ENCODE measurements at regions of chr13 and their contacts with region 1.

Region 1: DNA sequence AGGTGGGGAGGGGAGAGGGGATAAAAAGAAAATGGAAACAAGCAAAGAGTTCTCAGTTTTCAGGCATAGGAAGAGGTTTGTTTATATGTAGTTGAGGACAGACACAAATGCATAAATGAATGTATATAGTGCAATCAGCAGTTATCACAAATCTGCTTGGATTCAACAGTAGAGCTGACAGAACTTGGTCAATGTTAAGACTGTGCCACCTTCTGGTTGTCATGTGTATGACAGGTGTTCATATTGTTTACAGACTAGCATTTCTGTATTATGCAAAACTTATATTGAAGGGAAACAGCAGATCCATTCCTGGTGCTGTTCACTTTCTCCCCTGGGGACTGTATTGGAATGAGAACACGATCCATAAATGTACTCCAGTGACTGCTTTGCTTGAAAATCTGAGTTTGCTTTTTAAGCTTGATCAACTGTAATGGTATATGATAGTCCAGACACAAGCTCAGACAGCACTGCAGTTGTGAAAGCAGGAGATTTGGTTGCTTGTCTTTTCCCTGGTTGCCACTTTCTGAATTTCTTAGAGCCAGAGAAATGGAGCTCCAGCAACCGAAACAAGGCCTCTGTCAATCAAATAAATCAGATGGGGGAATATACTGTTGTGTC is 319.5 kb upstream of the OBI1 start:
- DNase-seq: no peak

Region 2: DNA sequence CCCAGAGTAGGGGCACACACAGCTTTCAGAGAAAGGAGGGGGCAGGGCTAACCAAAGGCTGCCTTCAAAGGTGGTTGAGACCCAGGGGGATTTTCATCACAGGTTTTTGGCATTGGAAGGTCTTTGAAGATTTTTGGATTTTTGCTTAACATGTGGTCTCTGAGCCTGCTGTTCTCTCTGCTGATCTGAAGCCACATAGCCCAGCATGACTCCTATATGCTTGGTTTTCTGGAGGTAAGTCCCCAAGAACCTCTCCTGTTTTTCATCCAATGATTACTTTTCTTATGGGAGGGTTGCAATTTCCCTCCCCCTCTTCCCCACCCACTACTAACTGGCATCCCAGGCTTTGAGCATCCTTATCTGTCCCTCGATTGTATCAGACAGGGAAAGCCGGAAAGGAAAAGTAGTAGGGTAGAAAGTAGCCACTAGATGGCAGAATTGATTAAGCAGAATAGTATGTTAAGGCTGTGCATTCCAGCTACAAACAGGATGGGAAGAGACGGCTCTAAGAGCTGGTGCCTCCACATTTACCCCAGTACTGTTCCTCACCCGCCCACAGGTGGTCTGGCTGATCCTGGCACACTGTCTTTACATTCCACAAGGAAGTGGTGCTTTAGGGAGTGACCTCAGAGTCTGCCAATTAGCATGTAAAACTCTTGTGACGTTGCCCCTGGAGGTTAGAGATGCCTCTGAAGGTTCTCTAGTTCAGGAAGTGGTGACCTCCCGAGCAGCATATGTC is 840.9 kb before region 1 on chr13:
- intact Hi-C with region 1: loop called (anchors 2 kb)
- DNase-seq: no peak

Region 3: GRCh38 chr13:78241278-78241919 is 737.1 kb before region 1 on chr13:
- intact Hi-C with region 1: loop called (anchors 10 kb)
- DNase-seq: no peak

Region 4: DNA sequence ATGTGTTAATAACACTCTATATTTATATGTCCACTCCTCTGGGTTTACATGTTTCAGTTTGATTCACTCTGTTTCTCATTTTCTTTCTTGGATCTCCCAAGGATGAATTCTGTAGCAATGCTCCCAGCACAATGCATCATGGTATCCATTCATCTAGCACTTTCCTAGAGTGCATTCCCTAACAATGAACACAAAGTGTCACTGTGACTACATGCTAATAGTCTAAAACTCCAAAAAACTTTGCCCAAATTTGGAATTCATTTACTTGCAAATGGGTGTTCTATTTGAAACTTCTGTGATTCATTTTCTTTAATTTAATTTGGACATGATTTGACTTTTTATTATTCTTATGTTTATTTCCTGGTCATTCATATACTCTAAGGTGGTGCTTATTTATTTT is 661.5 kb before region 1 on chr13:
- intact Hi-C with region 1: loop called (anchors 5 kb)
- DNase-seq: no peak

Region 5: DNA sequence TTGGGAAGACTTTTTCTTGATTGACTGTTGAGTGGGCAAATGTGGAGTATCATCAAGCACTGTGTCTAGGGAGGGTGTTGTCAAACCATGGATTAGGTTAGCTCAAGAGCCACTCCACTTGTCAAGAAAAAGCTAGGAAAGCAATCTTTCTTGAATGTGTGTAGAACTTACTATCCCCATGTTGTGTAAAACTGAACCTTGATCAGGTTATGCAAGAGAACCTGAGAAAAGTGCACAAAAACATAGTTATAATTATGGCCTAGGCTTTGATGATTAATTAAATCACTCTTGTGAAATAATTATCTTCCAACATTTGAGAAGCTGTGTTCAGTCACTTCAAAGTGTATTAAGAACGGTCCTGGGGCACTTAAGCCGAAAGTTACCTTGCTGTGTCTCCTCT is 81.3 kb before region 1 on chr13:
- intact Hi-C with region 1: no loop called
- DNase-seq: no peak

Measured in cardiac septum (tissue), 1 donor.